ENCODE measurements at regions of chr5 and their contacts with region 1.

Region 1: DNA sequence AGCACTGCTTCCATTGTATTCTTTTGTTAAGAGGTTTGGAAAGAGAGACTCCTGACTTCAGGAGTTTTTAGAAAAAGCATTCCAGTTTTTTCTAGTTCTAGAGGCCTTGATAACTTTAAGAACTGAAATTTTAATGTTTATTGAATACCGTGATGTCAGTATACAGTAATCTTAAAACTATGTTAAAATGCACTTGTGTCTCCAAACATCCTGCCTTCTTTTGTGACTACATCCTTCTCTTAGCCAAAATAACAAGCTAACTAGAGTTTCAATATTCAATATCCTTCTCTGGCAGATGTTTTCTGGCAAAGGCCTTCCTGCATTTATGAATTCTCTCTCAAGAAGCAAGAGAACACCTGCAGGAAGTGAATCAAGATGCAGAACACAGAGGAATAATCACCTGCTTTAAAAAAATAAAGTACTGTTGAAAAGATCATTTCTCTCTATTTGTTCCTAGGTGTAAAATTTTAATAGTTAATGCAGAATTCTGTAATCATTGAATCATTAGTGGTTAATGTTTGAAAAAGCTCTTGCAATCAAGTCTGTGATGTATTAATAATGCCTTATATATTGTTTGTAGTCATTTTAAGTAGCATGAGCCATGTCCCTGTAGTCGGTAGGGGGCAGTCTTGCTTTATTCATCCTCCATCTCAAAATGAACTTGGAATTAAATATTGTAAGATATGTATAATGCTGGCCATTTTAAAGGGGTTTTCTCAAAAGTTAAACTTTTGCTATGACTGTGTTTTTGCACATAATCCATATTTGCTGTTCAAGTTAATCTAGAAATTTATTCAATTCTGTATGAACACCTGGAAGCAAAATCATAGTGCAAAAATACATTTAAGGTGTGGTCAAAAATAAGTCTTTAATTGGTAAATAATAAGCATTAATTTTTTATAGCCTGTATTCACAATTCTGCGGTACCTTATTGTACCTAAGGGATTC is 43.1 kb downstream of the NDFIP1 start:
- DNase-seq: peak; percentile 83
- H3K4me3 ChIP-seq: no peak overlapping the region
- H3K27ac ChIP-seq: peak overlapping the region; percentile 2
- H3K4me1 ChIP-seq: peaks cover 19% of the 10 kb centered on the region
- H3K27me3 ChIP-seq: no peaks in the 10 kb centered on the region
- CTCF ChIP-seq: peak; percentile 63 to 66
- POLR2A ChIP-seq: no peak

Region 2: GRCh38 chr5:142192286-142193113 is 40.8 kb after region 1 on chr5:
- CTCF ChIA-PET with region 1: interaction called, 3 read pairs
- POLR2A ChIA-PET with region 1: no interaction called
- dilution Hi-C with region 1: no loop called
- intact Hi-C with region 1: loop called (anchors 2 kb)
- DNase-seq: peak; percentile 41
- H3K4me3 ChIP-seq: no peak overlapping the region
- H3K27ac ChIP-seq: peak overlapping the region; percentile 75
- H3K4me1 ChIP-seq: peaks cover 29% of the 10 kb centered on the region
- H3K27me3 ChIP-seq: no peaks in the 10 kb centered on the region
- CTCF ChIP-seq: no peak
- POLR2A ChIP-seq: no peak

Region 3: DNA sequence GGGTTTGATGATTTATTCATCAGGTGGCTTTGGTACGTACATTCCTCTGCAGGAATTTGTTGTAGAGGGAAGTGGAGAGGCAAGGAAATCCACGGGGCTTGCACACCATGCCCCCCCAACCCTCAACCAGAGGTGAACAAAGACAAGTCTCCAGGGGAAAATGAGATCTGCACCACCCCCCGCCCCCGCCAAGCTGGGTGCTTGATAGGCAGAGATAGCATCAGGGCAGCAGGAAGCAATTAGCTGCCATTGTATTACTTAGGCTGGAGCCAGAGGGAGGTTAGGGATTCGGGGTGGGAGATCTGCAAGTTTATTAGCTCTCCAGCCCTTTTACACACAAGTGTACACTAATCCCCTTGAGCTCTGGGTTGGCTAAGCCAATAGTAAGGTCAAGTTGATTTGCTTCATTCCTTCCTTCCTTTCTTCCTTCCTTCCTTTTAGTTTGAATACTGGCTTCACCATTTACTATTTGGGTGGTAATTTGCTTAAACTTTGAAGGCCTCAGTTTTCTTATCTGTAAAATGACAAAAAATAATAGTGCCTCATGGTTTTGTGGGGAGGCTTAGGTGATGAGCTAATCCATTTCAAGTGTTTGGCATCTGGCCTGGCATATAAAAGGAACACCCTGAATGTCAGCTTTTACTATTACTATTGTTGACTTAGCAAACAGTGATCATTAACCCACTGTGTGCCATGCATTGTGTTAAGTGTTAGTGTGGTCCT is 139.0 kb after region 1 on chr5:
- CTCF ChIA-PET with region 1: interaction called, 3 read pairs
- POLR2A ChIA-PET with region 1: no interaction called
- dilution Hi-C with region 1: no loop called
- intact Hi-C with region 1: loop called (anchors 2 kb)
- DNase-seq: peak; percentile 59
- H3K4me3 ChIP-seq: no peak overlapping the region
- H3K27ac ChIP-seq: peak overlapping the region; percentile 48
- H3K4me1 ChIP-seq: peaks cover 55% of the 10 kb centered on the region
- H3K27me3 ChIP-seq: no peaks in the 10 kb centered on the region
- CTCF ChIP-seq: no peak
- POLR2A ChIP-seq: no peak

Region 4: DNA sequence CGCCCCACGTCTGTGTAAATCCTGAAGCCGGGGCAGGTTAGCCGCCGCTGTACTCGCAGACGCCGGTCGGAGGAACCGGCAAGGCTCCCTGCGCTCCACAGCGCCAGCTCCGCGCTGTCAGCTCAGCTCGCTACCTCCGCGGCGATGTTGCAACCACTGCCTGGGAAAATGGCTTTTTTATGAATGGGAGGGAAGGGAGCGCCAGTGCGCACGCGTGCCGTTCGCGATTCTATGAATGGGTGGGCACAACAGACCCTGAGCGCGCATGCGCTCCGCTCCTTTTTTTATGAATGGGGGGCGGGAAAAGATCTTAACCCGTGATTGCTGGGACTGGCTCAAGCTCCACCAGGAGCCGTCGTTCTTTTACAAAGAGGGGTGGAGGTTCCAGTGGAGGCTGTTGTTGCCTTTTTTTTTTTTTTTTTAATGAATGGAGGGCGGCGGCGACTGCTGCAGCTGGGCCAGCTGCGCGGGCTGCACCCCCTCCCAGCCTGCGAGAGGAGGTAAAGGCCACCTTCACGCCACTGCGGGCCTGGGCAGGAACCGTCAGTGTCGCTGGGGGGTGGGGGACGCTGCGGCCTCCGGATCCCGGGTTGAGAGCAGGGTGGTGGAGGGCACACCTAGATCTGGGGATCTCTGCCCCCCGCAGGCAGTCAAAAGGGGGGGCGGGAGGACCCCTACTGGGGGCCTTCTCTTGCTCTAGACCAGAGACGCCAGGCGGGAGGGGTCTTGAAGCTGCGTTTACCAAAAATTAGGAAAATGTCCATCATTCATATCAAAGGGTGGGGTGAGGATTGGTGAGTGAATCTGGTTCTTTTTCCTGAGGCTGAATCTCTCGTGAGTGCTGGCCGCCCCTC is 173.4 kb after region 1 on chr5 and contains the start of gene SPRY4:
- CTCF ChIA-PET with region 1: interaction called, 23 read pairs
- POLR2A ChIA-PET with region 1: no interaction called
- dilution Hi-C with region 1: no loop called
- intact Hi-C with region 1: loop called (anchors 1 kb)
- DNase-seq: peak; percentile 98
- H3K4me3 ChIP-seq: peak within 1 kb of the TSS; percentile 76 to 89 (median 81)
- H3K27ac ChIP-seq: peak within 1 kb of the TSS; percentile 88
- H3K4me1 ChIP-seq: peaks cover 48% of the 10 kb centered on the region
- H3K27me3 ChIP-seq: no peaks in the 10 kb centered on the region
- CTCF ChIP-seq: no peak
- POLR2A ChIP-seq: peak; percentile 97
- total RNA-seq, gene SPRY4: 33.9 and 49.5 TPM in 2 replicates

Region 5: DNA sequence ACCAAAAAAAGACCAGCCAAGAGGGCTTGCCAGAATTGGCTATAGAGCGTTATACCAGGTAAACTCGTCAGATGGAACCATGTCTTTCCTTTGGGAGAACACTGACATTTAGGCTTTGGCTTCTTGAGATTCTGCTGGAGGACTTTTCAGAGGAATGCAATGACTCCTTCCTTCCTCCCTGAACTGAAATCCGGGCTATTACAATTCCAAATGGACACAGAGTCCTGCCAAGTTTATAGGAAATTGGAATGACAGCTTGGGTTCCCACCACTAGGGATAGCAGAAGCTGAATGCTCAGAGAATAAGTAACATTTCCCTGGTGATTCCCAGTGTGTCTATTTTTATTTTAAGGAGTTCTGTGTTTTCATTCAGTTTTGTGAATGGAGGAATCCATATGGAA is 391.2 kb after region 1 on chr5:
- CTCF ChIA-PET with region 1: interaction called, 68 read pairs
- POLR2A ChIA-PET with region 1: no interaction called
- dilution Hi-C with region 1: loop called (anchors 5 kb)
- intact Hi-C with region 1: loop called (anchors 1 kb)
- DNase-seq: peak; percentile 61
- H3K4me3 ChIP-seq: no peak overlapping the region
- H3K27ac ChIP-seq: peak overlapping the region; percentile 61
- H3K4me1 ChIP-seq: peaks cover 36% of the 10 kb centered on the region
- H3K27me3 ChIP-seq: no peaks in the 10 kb centered on the region
- CTCF ChIP-seq: peak; percentile 19 to 35
- POLR2A ChIP-seq: peak; percentile 23

Region 6: GRCh38 chr5:142655339-142656267 is 503.9 kb after region 1 on chr5:
- CTCF ChIA-PET with region 1: interaction called, 4 read pairs
- POLR2A ChIA-PET with region 1: no interaction called
- dilution Hi-C with region 1: no loop called
- intact Hi-C with region 1: loop called (anchors 1 kb)
- DNase-seq: peak; percentile 84
- H3K4me3 ChIP-seq: no peak overlapping the region
- H3K27ac ChIP-seq: no peak overlapping the region
- H3K4me1 ChIP-seq: no peaks in the 10 kb centered on the region
- H3K27me3 ChIP-seq: peaks cover 2 to 14% of the 10 kb centered on the region in 2 experiments
- CTCF ChIP-seq: peak; percentile 96 to 98
- POLR2A ChIP-seq: no peak